Transverse colon (tissue), 4 donors: ENCODE measurements at regions of chr7 and their contacts with region 1.

Region 1: DNA sequence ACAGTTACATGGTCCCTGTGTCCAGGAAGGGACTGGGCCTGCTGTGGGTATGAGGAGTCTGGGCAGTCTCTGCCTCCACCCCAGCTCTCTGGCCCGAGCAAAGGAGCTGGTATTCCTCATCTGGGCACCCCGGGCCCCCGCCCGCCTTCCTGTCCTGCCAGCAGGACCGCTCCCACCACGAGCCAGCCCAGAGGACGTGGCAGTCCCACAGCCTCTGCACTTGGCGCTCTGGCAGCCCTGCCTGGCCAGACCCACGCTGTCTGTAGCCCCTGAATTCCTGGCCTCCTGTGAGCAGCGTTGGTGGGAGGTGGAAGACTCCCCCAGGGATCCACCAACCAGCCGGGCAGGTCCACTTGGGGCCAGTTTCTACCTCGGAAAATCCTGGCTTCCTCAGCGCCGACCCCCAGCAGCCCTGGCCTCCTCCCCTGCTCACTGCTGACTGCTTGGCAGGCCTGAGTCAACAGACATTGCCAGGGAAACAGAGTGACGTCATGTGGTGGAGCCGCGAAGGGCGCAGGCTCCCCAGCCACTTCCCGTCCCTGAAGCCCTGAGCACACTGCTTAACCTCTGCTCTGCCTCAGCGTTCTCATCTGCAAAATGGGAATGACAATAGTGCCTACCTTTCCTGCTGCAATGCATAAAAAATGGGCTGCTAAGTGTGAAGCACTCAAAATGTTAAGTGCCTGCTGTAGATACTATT is 21.6 kb upstream of the LIMK1 start:
- DNase-seq: peak; percentile 89
- H3K4me3 ChIP-seq: peak overlapping the region in 1 of 4 donors; percentile 22
- H3K27ac ChIP-seq: peak overlapping the region; percentile 79 to 90 (median 84)
- H3K4me1 ChIP-seq: peaks cover 14 to 39% (median 30%) of the 10 kb centered on the region in 4 donors
- H3K27me3 ChIP-seq: no peaks in the 10 kb centered on the region
- CTCF ChIP-seq: no peak
- EP300 ChIP-seq: no peak
- POLR2A ChIP-seq: peak; percentile 69

Region 2: DNA sequence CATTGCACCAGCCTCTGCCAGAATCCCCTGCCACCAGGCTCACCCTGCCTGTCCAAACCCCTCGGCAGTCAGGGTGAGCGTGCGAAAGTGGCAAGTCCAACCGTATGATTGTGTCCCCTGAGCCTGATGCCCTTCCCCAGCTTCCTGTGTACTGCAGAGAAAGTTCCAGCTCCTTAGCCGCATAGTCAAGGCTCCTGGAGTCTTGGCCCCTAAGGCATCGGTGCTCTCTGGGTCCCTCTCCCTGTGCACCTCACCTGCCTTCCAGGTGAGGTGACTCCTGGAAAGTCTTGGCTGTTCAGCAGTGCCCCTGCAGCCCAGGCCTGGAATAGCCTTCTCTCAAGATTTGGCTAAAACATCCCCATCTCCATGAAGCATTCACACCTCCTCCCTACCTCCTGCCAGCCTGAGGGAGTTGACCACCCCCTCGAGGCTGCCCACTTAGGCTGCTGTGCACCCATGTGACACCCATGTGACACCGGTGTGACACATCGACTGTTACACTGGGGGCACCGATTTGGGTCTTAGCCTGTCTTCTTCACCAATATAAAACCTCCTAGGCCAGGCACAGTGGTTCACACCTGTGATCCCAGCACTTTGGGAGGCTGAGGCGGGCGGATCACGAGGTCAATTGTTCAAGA is 90.2 kb before region 1 on chr7:
- in situ Hi-C with region 1: loop called in 1 of 4 experiments (anchors 25 kb)
- intact Hi-C with region 1: no loop called
- DNase-seq: no peak
- H3K4me3 ChIP-seq: no peak overlapping the region
- H3K27ac ChIP-seq: no peak overlapping the region
- H3K4me1 ChIP-seq: no peaks in the 10 kb centered on the region
- H3K27me3 ChIP-seq: no peaks in the 10 kb centered on the region
- CTCF ChIP-seq: no peak
- EP300 ChIP-seq: no peak
- POLR2A ChIP-seq: no peak

Region 3: GRCh38 chr7:74133671-74134048 is 71.7 kb after region 1 on chr7:
- in situ Hi-C with region 1: no loop called
- intact Hi-C with region 1: no loop called
- DNase-seq: no peak
- H3K4me3 ChIP-seq: no peak overlapping the region
- H3K27ac ChIP-seq: no peak overlapping the region
- H3K4me1 ChIP-seq: peaks cover 0 to 10% (median 0%) of the 10 kb centered on the region in 4 donors
- H3K27me3 ChIP-seq: no peaks in the 10 kb centered on the region
- CTCF ChIP-seq: no peak
- EP300 ChIP-seq: no peak
- POLR2A ChIP-seq: no peak

Region 4: DNA sequence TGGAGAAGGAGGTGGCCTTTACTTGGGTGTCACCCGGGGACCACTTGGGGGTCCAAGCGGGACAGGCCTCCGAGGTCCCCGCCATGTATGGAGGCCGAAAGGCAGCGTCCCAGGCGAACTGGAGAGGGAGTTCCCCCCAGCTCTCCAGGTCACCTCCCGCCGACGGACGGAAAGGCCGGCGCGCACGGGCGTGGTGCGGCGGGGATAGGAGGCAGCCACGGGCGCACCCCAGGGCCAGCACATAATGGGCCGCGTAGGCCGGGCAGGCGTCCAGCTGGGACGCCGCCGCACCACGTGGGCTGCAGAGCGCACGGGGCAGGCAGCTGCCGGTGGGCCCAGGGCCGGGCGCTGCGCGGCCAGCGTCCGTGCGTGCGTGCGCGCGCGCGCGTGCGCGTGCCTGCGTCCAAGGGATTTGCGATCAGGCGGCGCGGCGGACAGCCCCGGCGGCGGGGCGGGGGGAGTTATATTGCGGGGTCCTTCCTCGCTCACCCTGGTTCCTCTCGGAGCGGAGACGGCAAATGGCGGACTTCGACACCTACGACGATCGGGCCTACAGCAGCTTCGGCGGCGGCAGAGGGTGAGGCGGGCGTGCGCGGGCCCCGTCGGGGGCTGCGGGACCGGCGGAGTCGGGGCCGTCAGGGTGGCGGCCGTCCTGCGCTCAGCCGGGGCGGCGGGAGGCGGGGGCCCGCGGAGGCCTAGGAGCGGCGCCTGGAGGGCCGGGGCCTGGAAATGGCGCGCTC is 112.0 kb after region 1 on chr7 and contains the start of gene EIF4H:
- in situ Hi-C with region 1: loop called in 1 of 4 experiments (anchors 25 kb)
- intact Hi-C with region 1: loop called (anchors 10 kb)
- DNase-seq: peak; percentile 98
- H3K4me3 ChIP-seq: peak within 1 kb of the TSS; percentile 73 to 98 (median 90)
- H3K27ac ChIP-seq: peak within 1 kb of the TSS; percentile 95 to 98 (median 97)
- H3K4me1 ChIP-seq: peaks cover 27 to 57% (median 48%) of the 10 kb centered on the region in 4 donors
- H3K27me3 ChIP-seq: no peaks in the 10 kb centered on the region
- CTCF ChIP-seq: no peak
- EP300 ChIP-seq: no peak
- POLR2A ChIP-seq: peak; percentile 80
- total RNA-seq, gene EIF4H: 175 to 250 (median 213) TPM

Region 5: GRCh38 chr7:74183613-74184450 is 121.8 kb after region 1 on chr7:
- in situ Hi-C with region 1: loop called in 2 of 4 experiments (anchors 10 to 25 kb)
- intact Hi-C with region 1: loop called (anchors 10 kb)
- DNase-seq: no peak
- H3K4me3 ChIP-seq: no peak overlapping the region
- H3K27ac ChIP-seq: peak overlapping the region in 3 of 4 donors; percentile 19 to 63 (median 59)
- H3K4me1 ChIP-seq: peaks cover 50 to 95% (median 71%) of the 10 kb centered on the region in 4 donors
- H3K27me3 ChIP-seq: no peaks in the 10 kb centered on the region
- CTCF ChIP-seq: peak in 2 of 5 experiments; percentile 15 to 20
- EP300 ChIP-seq: no peak
- POLR2A ChIP-seq: no peak

Region 6: DNA sequence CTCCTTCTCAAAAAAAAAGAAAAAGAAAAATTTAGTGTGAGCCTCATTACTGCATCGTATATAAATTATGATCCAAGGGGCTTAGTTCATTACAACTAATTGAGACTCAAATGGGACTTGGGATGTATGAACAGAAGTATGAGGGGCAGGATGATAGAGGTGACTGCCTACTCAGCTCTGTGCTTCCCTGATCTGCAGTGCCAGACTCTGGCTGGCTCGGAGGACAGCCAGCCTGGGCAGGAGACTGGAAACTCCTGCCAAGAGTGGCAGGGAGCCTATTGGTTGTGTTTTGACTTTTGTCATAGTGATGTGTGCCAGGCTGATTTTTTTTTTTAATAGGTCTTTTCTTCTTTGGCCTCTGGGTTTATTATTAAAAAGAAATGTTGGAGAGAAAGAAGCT is 317.9 kb after region 1 on chr7:
- in situ Hi-C with region 1: loop called in 1 of 4 experiments (anchors 25 kb)
- intact Hi-C with region 1: no loop called
- DNase-seq: no peak
- H3K4me3 ChIP-seq: no peak overlapping the region
- H3K27ac ChIP-seq: peak overlapping the region in 3 of 4 donors; percentile 5 to 53 (median 36)
- H3K4me1 ChIP-seq: no peaks in the 10 kb centered on the region
- H3K27me3 ChIP-seq: no peaks in the 10 kb centered on the region
- CTCF ChIP-seq: no peak
- EP300 ChIP-seq: no peak
- POLR2A ChIP-seq: no peak

Region 7: GRCh38 chr7:74612015-74612829 is 550.2 kb after region 1 on chr7:
- in situ Hi-C with region 1: no loop called
- intact Hi-C with region 1: no loop called
- DNase-seq: no peak
- H3K4me3 ChIP-seq: no peak overlapping the region
- H3K27ac ChIP-seq: no peak overlapping the region
- H3K4me1 ChIP-seq: peaks cover 1 to 20% (median 3%) of the 10 kb centered on the region in 4 donors
- H3K27me3 ChIP-seq: no peaks in the 10 kb centered on the region
- CTCF ChIP-seq: no peak
- EP300 ChIP-seq: no peak
- POLR2A ChIP-seq: no peak